Common myeloid progenitor, CD34-positive (primary cell): ENCODE measurements at regions of chr6 and their contacts with region 1.

Region 1: GRCh38 chr6:41705996-41706835 is 29.2 kb downstream of the TFEB start:
- DNase-seq: peak; percentile 63 to 88 (median 86)
- H3K4me3 ChIP-seq: no peak overlapping the region
- H3K27ac ChIP-seq: no peak overlapping the region
- H3K4me1 ChIP-seq: peaks cover 2 to 36% (median 27%) of the 10 kb centered on the region in 4 experiments
- H3K27me3 ChIP-seq: no peaks in the 10 kb centered on the region

Region 2: DNA sequence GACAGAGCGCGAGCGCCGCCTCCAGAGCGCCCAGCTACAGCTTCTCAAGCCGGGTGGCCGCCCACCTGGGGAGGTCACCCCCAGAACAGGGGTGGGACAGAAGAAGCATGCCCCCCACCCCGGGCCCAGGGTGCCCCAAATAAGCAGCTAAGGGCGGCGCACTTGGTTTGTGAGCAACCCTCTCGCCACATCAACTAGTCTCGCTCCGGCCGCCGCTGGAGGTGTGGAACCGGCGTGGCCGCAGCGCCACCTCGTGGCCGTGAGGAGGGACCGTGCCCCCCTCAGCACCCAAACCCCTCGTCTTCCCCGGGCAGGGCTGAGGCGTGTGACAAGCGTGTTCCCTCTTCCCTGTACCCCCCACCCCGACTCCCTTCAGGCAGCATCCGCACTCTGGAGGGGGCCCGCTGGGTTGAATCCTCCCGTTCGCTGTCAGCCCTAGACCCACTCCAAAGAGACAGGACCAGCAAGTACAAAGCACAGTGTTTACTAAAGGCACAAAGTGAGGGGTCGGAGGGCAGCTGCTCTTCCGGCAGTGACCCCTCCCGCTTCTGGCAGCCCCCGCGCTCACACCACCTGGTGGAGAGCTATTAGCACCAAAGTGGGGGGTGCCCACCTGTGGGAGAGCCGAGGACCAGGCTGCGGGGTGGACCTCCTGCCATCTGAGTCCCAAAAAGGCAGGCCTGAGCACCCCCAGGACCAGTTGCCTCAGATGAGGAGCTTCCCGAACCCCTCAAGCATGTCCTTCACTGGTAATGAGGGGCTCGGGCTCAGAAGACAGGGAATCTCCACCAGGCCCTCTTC is 22.5 kb before region 1 on chr6:
- CTCF ChIA-PET with region 1: interaction called, 57 read pairs
- POLR2A ChIA-PET with region 1: no interaction called
- DNase-seq: peak; percentile 78 to 84 (median 82)
- H3K4me3 ChIP-seq: peak overlapping the region in 5 of 7 experiments; percentile 34 to 76 (median 69)
- H3K27ac ChIP-seq: peak overlapping the region; percentile 5 to 15
- H3K4me1 ChIP-seq: peaks cover 0 to 19% (median 17%) of the 10 kb centered on the region in 4 experiments
- H3K27me3 ChIP-seq: no peaks in the 10 kb centered on the region

Region 3: GRCh38 chr6:41723530-41724227 is 17.5 kb after region 1 on chr6:
- CTCF ChIA-PET with region 1: interaction called, 90 read pairs
- POLR2A ChIA-PET with region 1: no interaction called
- DNase-seq: peak; percentile 78 to 92 (median 92)
- H3K4me3 ChIP-seq: peak overlapping the region in 3 of 7 experiments; percentile 10 to 40 (median 28)
- H3K27ac ChIP-seq: no peak overlapping the region
- H3K4me1 ChIP-seq: peaks cover 4 to 40% (median 29%) of the 10 kb centered on the region in 4 experiments
- H3K27me3 ChIP-seq: no peaks in the 10 kb centered on the region

Region 4: DNA sequence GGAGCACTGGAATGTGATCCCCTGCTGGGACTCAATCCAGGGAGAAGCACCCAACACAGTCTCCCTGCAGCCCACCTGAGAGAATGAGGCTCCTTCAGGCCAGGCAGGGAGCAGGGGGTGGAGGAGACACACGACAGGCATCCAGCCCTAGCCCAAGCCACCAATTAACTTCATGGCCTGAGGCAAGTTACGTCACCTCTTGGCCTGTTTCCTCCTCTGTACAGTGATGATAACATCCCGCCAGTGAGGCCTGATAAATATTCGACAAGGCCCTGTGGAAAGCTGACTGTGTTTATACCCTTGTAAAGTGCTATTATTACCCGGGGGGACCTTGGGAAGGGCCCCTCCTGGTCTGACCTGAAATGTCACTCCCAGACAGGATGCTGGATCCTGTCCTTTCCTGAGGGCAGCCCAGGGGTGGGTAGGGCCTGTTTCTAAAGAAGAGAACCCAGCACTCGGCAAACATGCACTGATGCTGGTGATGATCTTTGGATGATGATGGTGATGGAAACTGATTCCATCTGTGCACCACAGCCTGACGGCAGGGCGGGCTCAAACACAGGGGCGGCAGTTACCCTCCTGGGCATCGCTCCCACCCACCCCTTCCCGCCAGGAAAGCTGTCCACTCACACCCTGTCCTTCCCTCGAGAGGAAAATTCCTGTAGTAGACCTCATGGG is 61.1 kb after region 1 on chr6:
- CTCF ChIA-PET with region 1: interaction called, 98 read pairs
- POLR2A ChIA-PET with region 1: no interaction called
- DNase-seq: peak; percentile 86 to 93 (median 89)
- H3K4me3 ChIP-seq: peak overlapping the region in 1 of 7 experiments; percentile 8
- H3K27ac ChIP-seq: peak overlapping the region; percentile 78 to 82
- H3K4me1 ChIP-seq: peaks cover 6 to 46% (median 36%) of the 10 kb centered on the region in 4 experiments
- H3K27me3 ChIP-seq: no peaks in the 10 kb centered on the region

Region 5: GRCh38 chr6:41787219-41787917 is 81.2 kb after region 1 on chr6 and contains the start of gene TOMM6:
- CTCF ChIA-PET with region 1: interaction called, 58 read pairs
- POLR2A ChIA-PET with region 1: no interaction called
- DNase-seq: peak; percentile 96 to 97 (median 97)
- H3K4me3 ChIP-seq: peak within 1 kb of the TSS; percentile 92 to 100 (median 97)
- H3K27ac ChIP-seq: peak within 1 kb of the TSS; percentile 93 to 99
- H3K4me1 ChIP-seq: peaks cover 0 to 38% (median 20%) of the 10 kb centered on the region in 4 experiments
- H3K27me3 ChIP-seq: no peaks in the 10 kb centered on the region

Region 6: DNA sequence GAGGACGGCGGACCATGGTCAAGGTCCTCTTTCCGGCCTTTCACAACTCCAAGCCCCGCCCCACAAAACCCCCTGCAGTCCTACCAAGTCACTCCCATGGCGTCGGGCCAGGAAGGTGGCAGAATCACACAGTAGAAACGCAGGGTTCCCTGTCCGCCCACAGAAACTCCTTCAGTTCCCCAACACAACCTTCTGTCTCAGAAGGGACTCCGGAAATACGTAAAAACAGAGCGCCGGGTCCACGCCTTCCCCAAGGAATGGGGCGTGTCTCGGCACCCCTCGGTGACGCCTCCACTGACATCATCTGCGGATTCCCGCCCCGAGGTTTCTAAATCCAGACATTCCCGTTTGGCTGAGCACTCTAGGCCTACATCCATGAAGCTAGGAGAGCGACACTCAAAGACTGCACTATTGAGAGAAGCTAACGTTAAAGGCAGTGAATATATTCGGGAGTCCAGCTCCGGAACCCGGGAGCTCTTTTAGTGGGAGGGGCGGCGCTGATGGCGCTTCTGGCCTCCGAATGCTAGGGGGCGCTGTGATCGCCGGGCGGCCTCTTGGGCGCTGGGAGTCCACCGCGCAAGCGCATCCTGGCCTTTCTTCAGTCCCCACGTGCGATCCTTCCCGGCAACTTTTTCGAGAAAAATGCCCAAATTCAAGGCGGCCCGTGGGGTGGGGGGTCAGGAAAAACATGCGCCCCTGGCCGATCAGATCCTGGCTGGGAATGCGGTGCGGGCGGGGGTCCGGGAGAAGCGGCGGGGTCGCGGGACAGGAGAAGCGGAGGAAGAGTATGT is 214.9 kb after region 1 on chr6 and contains the starts of genes BYSL and MED20:
- CTCF ChIA-PET with region 1: no interaction called
- POLR2A ChIA-PET with region 1: no interaction called
- DNase-seq: peak; percentile 97 to 98 (median 98)
- H3K4me3 ChIP-seq: peak within 1 kb of the TSS; percentile 87 to 100 (median 99)
- H3K27ac ChIP-seq: peak within 1 kb of the TSS; percentile 96 to 97
- H3K4me1 ChIP-seq: peaks cover 20 to 38% (median 27%) of the 10 kb centered on the region in 4 experiments
- H3K27me3 ChIP-seq: no peaks in the 10 kb centered on the region